Activated CD4-positive, alpha-beta T cell treated with anti-CD3 and anti-CD28 coated beads for 36 hours (primary cell): ENCODE measurements at regions of chr22 and their contacts with region 1.

Region 1: DNA sequence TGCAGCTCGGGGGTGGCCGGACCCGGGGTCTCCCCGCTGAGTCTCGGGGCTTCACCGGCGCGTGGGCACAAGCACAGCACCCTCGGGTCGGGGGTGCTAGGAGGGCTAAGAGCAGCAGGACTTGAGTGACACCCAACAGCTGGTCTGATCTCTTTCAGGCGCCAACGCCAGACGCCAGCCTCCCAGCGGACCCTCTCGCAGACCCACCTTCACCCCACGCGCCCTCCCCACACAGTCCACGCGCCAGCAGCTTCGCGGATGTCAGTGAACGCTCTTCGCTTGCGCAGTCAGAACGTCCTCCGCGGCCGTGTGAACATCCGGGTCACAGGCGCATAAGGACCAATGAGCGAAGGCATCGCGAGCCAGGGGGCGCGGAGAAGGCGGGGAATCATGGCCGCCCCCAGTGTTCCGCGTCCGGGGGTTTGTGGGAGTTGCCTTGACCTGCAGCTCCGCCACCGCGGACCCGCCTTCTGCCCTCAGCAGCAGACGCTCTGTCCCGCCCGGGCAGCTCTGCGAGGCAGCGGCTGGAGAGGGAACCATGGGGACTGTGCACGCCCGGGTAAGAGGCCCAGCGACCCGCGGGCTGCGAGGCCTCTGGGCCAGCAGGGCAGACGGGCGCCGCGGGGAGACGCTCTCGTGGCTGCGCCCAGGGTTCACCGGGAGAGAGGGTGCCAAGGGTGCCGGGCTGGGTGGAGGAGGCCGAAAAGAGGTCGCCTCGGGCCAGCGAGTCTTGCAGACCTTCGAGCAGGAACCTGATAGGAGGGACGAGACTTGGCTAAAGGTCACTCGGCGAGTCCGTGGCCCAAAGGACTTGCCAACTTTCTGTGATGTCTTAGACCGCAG is at the start of gene SAMM50:
- DNase-seq: peak; percentile 95
- ATAC-seq: peak; percentile 97
- H3K4me3 Mint-ChIP-seq: peak within 1 kb of the TSS; percentile 99
- H3K27ac Mint-ChIP-seq: peak within 1 kb of the TSS; percentile 96
- H3K4me1 Mint-ChIP-seq: peaks cover 25% of the 10 kb centered on the region
- H3K27me3 Mint-ChIP-seq: no peaks in the 10 kb centered on the region
- total RNA-seq, gene SAMM50: 35.2 to 43.8 TPM

Region 2: DNA sequence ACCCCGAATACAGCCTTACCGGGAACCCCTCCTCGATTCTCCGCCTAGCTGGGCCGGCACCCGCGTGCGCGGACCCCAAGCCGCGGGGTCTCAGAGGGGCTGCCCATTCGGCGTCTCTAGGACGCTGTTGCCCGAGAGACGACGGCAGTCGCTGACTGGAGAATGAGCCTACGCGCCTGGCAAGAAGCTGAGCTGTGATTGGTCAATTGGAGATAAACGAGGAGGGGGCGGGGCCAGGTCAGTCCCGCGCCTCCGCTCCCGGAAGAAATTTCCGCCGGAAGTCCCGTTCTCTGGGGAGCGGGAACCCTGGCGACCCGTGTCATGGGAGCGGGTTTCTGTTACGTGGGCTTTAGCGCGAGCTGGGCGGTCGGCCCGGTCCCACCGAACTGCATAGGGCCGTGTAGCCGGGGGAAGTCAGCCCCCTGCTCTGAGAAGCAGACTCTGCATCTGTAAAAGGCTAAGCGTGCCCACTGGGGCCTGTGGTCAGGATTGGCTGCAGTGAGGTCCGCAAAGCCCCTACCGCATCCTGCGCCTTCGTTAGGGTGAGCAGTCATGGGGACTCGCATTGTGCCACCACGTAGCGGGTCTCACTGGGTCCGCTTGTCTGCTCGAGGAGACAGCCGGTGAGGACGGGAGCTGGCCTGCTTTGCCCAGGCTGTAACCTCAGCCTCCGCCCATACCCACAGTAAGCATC is 143.0 kb before region 1 on chr22 and contains the start of gene EFCAB6:
- CTCF ChIA-PET with region 1: no interaction called
- POLR2A ChIA-PET with region 1: no interaction called
- intact Hi-C with region 1: loop called in 1 of 2 experiments (anchors 1 kb)
- DNase-seq: peak; percentile 95
- ATAC-seq: peak; percentile 89
- H3K4me3 Mint-ChIP-seq: peak within 1 kb of the TSS; percentile 87
- H3K27ac Mint-ChIP-seq: peak within 1 kb of the TSS; percentile 90
- H3K4me1 Mint-ChIP-seq: peaks cover 23% of the 10 kb centered on the region
- H3K27me3 Mint-ChIP-seq: no peaks in the 10 kb centered on the region
- total RNA-seq, gene EFCAB6: 0.56 to 0.71 TPM

Region 3: GRCh38 chr22:43923631-43924464 is 31.4 kb before region 1 on chr22 and contains the start of gene PNPLA3:
- CTCF ChIA-PET with region 1: no interaction called
- POLR2A ChIA-PET with region 1: no interaction called
- intact Hi-C with region 1: loop called in 1 of 2 experiments (anchors 1 kb)
- DNase-seq: peak; percentile 90
- ATAC-seq: peak; percentile 94
- H3K4me3 Mint-ChIP-seq: peak within 1 kb of the TSS; percentile 59
- H3K27ac Mint-ChIP-seq: peak within 1 kb of the TSS; percentile 51
- H3K4me1 Mint-ChIP-seq: peaks cover 4% of the 10 kb centered on the region
- H3K27me3 Mint-ChIP-seq: peaks cover 14% of the 10 kb centered on the region
- total RNA-seq, gene PNPLA3: 0.54 to 0.55 TPM

Region 4: DNA sequence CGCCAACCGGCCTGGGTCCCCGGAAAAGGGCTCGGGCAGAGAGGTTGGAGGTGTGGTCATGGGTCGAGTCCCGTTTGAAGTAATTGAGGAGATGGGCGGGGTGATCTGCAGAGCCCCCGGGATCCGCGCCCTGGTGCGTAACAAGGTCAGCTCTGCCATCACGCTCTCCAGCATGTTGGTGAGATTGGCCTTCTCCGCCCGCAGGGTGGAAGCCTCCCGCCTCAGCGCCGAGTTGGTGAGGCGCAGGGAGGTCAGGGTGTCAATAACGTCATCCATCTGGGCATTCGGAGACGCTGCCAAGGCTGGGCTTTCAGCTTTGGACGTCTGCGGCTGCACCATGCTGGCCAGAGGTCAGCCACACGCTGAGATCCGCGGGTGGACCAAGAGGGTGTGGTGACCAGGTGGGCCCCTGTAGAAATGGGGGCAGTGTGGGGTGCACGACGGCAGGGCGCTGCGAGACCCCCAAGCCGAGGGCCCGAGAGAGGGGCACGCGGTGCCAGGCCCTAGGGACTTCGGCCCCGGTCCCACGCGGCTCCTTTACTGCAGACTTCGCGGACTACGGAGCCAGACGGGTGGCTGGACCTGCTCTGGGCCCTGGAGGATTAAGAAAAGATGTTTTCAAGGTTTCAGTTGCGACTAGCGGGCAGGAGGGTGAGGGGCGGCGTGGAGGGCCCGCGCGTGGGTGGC is 542.1 kb after region 1 on chr22:
- CTCF ChIA-PET with region 1: no interaction called
- POLR2A ChIA-PET with region 1: no interaction called
- intact Hi-C with region 1: loop called in 1 of 2 experiments (anchors 5 kb)
- DNase-seq: no peak
- ATAC-seq: no peak
- H3K4me3 Mint-ChIP-seq: peak overlapping the region; percentile 68
- H3K27ac Mint-ChIP-seq: peak overlapping the region; percentile 47
- H3K4me1 Mint-ChIP-seq: peaks cover 30% of the 10 kb centered on the region
- H3K27me3 Mint-ChIP-seq: no peaks in the 10 kb centered on the region